ENCODE measurements at regions of chr3 and their contacts with region 1.

Region 1: GRCh38 chr3:39150799-39151631 is 2.4 kb downstream of the CSRNP1 start:
- DNase-seq: peak; percentile 86
- H3K4me3 Mint-ChIP-seq: peak overlapping the region; percentile 88
- H3K27ac Mint-ChIP-seq: peak overlapping the region; percentile 99
- H3K4me1 Mint-ChIP-seq: peaks cover 69% of the 10 kb centered on the region
- H3K27me3 Mint-ChIP-seq: no peaks in the 10 kb centered on the region
- CTCF ChIP-seq: no peak

Region 2: GRCh38 chr3:39107388-39108199 is 43.4 kb before region 1 on chr3 and contains the starts of genes GORASP1 and TTC21A:
- CTCF ChIA-PET with region 1: no interaction called
- intact Hi-C with region 1: loop called (anchors 2 kb)
- DNase-seq: peak; percentile 69
- H3K4me3 Mint-ChIP-seq: peak within 1 kb of the TSS; percentile 92
- H3K27ac Mint-ChIP-seq: peak within 1 kb of the TSS; percentile 73
- H3K4me1 Mint-ChIP-seq: peaks cover 45% of the 10 kb centered on the region
- H3K27me3 Mint-ChIP-seq: no peaks in the 10 kb centered on the region
- CTCF ChIP-seq: no peak
- total RNA-seq, gene GORASP1: 54.8 and 58.6 TPM in 2 replicates
- total RNA-seq, gene TTC21A: 8.1 and 9.1 TPM in 2 replicates

Region 3: GRCh38 chr3:39196671-39197356 is 45.8 kb after region 1 on chr3:
- CTCF ChIA-PET with region 1: interaction called, 12 read pairs
- intact Hi-C with region 1: no loop called
- DNase-seq: no peak
- H3K4me3 Mint-ChIP-seq: no peak overlapping the region
- H3K27ac Mint-ChIP-seq: no peak overlapping the region
- H3K4me1 Mint-ChIP-seq: peaks cover 6% of the 10 kb centered on the region
- H3K27me3 Mint-ChIP-seq: peaks cover 10% of the 10 kb centered on the region
- CTCF ChIP-seq: no peak

Region 4: GRCh38 chr3:39396690-39397089 is 245.7 kb after region 1 on chr3:
- CTCF ChIA-PET with region 1: no interaction called
- intact Hi-C with region 1: no loop called
- DNase-seq: no peak
- H3K4me3 Mint-ChIP-seq: no peak overlapping the region
- H3K27ac Mint-ChIP-seq: no peak overlapping the region
- H3K4me1 Mint-ChIP-seq: no peaks in the 10 kb centered on the region
- H3K27me3 Mint-ChIP-seq: no peaks in the 10 kb centered on the region
- CTCF ChIP-seq: no peak